Heart right ventricle (tissue), 16 donors: ENCODE measurements at regions of chr13 and their contacts with region 1.

Region 1: DNA sequence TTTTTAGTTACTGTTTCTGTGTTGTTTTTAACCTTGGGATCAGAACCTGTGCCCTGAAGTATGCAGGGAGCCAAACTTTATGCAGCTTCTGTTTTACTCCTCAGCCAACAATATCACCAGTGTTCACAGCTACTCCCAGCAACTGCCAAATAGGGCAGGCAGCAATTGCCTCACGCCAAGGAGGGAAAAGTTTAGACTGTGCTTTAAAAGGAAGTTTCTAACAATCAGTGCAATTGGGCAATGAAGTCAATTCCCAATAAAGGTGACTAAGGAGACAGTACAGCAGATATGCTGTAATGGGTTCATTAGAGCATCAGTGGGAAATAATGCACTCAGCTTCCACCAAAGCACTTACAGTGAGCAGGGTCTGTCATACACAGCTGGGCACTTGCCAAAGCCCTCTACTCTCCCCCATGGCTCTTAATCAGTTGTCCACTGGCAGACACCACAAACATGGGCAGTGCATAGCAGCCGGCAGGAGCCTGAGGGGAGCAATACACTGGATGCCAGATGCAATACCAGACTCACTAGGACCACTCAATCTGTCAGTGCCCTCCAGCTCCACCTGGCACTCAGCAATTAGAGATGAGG is 19.3 kb downstream of the ENOX1 start:
- DNase-seq: peak; percentile 21 to 34
- ATAC-seq: peak; percentile 80 to 92 (median 90)
- H3K4me3 ChIP-seq: peak overlapping the region in 1 of 10 donors; percentile 3
- H3K27ac ChIP-seq: peak overlapping the region; percentile 4 to 86 (median 73)
- H3K4me1 ChIP-seq: peaks cover 0 to 50% (median 24%) of the 10 kb centered on the region in 9 donors
- H3K27me3 ChIP-seq: no peaks in the 10 kb centered on the region
- CTCF ChIP-seq: no peak

Region 2: GRCh38 chr13:43686557-43686956 is 80.9 kb before region 1 on chr13:
- intact Hi-C with region 1: loop called in 1 of 10 experiments (anchors 5 kb)
- DNase-seq: peak; percentile 27 to 80
- ATAC-seq: peak; percentile 57 to 94 (median 88)
- H3K4me3 ChIP-seq: no peak overlapping the region
- H3K27ac ChIP-seq: peak overlapping the region in 9 of 10 donors; percentile 7 to 81 (median 70)
- H3K4me1 ChIP-seq: peaks cover 3 to 53% (median 33%) of the 10 kb centered on the region in 9 donors
- H3K27me3 ChIP-seq: no peaks in the 10 kb centered on the region
- CTCF ChIP-seq: no peak

Region 3: GRCh38 chr13:43698758-43699157 is 68.7 kb before region 1 on chr13:
- intact Hi-C with region 1: loop called in 1 of 10 experiments (anchors 5 kb)
- DNase-seq: no peak
- ATAC-seq: peak in 7 of 8 donors; percentile 66 to 85 (median 78)
- H3K4me3 ChIP-seq: no peak overlapping the region
- H3K27ac ChIP-seq: peak overlapping the region in 6 of 10 donors; percentile 42 to 61 (median 48)
- H3K4me1 ChIP-seq: peaks cover 0 to 47% (median 20%) of the 10 kb centered on the region in 9 donors
- H3K27me3 ChIP-seq: no peaks in the 10 kb centered on the region
- CTCF ChIP-seq: no peak